ENCODE measurements at regions of chr3 and their contacts with region 1.

Region 1: GRCh38 chr3:111252779-111253178 is 181.2 kb downstream of the NECTIN3 start:
- DNase-seq: no peak
- H3K4me3 ChIP-seq: no peak overlapping the region
- CTCF ChIP-seq: no peak
- POLR2A ChIP-seq: no peak

Region 2: DNA sequence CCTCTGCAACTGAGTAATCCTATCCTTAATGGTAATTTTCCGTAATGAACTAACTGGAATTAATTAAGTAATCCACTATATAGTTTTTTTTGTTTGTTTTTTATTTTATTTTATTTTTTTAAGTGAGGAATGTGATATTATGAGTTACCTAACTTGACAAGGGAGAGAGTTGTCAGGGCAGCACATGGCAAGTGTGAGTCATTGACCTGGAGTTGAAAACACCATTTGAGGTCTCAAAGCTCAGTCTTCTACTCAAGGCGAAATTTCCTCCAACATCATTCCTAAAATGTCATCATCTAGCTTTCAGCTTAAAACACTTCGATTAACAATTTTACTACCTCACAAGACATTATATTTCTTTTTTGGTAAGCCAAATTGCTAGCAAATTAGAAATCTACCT is 93.4 kb before region 1 on chr3:
- intact Hi-C with region 1: no loop called
- DNase-seq: no peak
- H3K4me3 ChIP-seq: no peak overlapping the region
- CTCF ChIP-seq: no peak
- POLR2A ChIP-seq: no peak

Region 3: DNA sequence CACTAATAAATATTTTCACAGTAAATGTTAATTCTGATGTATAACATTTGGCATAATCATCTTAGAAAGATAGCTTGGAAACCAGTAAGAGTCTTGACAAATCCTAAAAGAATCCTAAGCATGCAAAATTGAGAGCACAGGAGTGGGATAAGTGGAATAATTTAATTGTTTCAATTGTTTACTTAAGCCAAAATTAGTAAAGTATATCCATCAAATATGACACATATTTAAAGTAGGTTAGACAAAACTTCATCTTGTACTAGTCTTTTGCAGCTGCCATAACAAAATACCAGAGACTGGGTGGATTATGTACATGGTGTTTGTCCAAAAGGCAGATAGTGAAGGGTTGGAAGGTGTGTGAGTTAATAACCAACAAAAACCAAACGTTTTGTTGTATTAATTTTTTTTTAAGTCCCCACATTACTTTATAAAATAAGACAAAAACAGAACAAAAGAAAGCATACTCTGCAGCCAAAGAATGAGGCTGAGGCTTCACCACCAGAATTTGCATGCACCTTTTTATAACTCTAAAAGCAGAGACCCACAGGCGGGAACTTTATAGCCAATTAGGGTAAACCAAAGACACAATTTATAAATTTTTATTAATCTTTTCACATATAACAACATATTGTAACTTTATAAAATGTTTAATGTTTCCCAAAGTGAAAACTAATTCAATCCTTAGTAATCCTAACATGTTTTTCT is 1635.8 kb after region 1 on chr3:
- intact Hi-C with region 1: loop called (anchors 5 kb)
- DNase-seq: no peak
- H3K4me3 ChIP-seq: no peak overlapping the region
- CTCF ChIP-seq: no peak
- POLR2A ChIP-seq: no peak